Sciatic nerve (tissue), 2 donors: ENCODE measurements at regions of chr17 and their contacts with region 1.

Region 1: DNA sequence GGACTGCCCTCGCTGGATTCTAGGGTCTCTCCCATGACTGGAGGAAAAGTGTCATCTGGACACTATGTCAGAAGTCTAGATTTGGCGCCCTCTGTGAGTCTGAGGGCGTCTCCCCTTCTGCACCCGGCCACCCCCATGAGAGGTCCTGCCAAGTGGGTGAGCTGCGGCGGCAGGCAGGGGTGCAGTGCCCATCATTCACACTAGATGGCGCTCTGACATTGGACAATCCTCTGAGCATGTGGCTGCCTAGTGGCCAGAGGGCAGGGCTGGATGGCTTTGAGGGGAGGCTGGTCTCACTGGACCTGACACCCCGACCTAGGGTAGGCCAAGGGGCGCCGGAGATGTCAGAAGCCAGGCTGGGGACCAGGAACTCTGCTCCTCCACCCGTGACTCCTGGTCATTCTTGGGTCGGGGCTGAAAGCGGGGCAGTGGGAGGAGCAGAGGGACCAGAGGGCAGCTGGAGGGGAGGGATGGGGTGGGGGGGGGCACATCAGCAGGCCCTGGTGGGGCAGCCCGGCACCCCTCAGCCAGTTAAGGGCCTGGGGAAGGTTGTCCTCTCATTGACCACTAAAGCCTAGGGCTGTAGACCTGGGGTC is 28.0 kb downstream of the MRM1 start:
- DNase-seq: peak; percentile 87
- ATAC-seq: peak; percentile 90

Region 2: DNA sequence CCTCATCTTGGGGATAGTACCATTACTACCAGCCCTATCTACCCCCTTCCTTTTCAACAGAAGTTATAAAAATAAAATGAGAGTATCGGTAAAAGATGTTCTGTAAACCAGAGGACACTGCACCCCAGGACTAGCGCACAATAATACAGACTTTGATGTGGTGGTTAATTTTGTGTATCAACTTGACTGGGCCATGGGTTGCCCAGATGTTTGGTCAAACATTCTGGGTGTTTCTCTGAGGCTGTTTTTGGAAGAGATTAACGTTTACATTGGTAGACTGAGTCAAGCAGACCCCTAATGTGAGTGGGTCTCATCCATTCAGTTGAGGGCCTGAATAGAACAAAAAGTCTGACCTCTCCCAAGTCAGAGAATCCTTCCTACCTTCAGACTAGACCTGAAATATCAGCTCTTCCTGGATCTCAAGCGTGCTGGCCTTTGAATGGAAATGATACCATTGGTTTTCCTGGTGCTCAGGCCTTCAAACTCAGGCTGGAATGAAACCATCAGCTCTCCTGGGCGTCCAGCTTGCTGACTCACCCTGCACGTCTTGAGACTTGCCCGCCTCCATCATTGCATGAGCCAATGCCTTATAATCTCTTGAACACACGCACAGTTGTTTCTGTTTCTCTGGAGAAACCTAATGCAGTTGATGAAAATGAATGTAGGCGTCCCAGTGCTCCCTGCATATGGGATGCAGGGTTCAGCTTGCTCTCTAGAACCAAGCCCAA is 17.8 kb before region 1 on chr17:
- intact Hi-C with region 1: no loop called
- DNase-seq: no peak
- ATAC-seq: no peak

Region 3: DNA sequence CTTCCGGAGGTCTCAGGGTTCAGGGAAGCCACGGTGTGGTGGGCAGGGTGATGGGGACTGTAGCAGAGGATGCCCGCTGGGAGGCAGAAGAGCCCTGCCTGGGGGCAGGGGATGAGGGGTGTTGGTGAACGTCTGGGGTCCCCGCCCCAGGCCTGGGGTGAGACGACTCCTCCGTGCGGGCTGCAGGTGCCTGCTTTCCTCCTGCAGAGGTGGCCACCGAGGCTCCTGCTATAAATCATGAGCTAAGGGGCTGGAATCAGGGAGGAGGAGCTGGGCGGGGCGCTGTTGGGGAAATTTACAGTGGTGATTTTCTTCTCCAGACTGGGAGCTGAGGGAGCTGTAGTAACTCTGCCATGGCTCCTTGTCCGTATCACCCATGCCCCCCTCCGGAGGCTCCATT is 139.0 kb after region 1 on chr17:
- intact Hi-C with region 1: no loop called
- DNase-seq: no peak
- ATAC-seq: no peak

Region 4: GRCh38 chr17:36869856-36870719 is 240.7 kb after region 1 on chr17:
- intact Hi-C with region 1: no loop called
- DNase-seq: no peak
- ATAC-seq: no peak

Region 5: DNA sequence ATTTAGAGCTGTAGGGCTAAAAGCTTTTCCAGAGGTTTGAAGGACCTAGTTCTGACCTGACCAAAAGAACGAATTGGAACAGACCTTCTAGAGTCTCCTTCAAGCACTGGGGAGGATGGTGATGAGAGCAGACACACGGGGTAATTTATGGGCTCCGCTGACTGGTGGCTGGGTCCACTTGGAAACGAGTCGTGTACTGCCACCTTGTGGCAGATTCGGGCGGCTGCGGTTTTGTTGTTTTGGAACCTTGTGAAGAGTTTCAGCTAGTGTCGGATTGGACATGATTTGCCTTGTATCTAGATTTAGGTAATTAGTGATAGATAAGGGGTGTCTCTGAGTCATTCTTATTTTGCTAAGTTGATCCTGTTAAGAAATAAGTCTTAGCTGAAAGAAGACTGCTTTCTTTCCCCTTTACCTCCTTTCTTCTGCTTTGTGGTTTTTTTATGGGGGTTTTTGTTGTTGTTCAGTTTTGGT is 418.3 kb after region 1 on chr17:
- intact Hi-C with region 1: loop called (anchors 5 kb)
- DNase-seq: peak; percentile 90
- ATAC-seq: peak; percentile 80

Region 6: GRCh38 chr17:37358830-37359681 is 729.7 kb after region 1 on chr17:
- intact Hi-C with region 1: loop called (anchors 10 kb)
- DNase-seq: peak; percentile 97
- ATAC-seq: peak; percentile 96